K562 (cell line): ENCODE measurements at regions of chr3 and their contacts with region 1.

Region 1: DNA sequence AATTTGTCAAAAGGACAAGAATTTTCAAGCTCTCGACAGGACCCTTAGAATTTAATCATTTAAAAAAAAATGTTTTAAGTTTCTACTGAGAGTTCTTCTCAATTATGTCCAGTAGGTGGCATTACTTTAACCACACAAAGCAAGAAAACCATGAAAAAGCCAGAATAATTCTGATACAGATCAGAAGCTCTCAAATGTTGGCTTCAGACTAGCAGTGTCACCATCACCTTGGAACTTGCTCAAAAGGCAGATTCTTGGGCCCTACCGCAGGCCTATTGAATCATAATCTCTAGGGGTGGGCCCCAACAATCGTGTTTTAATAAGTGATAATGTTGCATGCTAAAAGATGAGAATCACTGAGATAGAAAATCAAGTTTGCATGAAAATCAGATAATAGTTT is 99.5 kb upstream of the KCNMB2 start:
- DNase-seq: peak; percentile 14 to 25 (median 23)
- ATAC-seq: peak; percentile 68
- H3K4me3 ChIP-seq: no peak overlapping the region
- H3K27ac ChIP-seq: no peak overlapping the region
- H3K4me1 ChIP-seq: no peaks in the 10 kb centered on the region; a peak in 1 of 5 replicates
- H3K27me3 ChIP-seq: no peaks in the 10 kb centered on the region
- CTCF ChIP-seq: peak; percentile 41 to 68 (median 45); a peak in 4 of 6 replicates
- EP300 ChIP-seq: no peak
- POLR2A ChIP-seq: no peak
- RAD21 ChIP-seq: peak; percentile 65 to 70

Region 2: DNA sequence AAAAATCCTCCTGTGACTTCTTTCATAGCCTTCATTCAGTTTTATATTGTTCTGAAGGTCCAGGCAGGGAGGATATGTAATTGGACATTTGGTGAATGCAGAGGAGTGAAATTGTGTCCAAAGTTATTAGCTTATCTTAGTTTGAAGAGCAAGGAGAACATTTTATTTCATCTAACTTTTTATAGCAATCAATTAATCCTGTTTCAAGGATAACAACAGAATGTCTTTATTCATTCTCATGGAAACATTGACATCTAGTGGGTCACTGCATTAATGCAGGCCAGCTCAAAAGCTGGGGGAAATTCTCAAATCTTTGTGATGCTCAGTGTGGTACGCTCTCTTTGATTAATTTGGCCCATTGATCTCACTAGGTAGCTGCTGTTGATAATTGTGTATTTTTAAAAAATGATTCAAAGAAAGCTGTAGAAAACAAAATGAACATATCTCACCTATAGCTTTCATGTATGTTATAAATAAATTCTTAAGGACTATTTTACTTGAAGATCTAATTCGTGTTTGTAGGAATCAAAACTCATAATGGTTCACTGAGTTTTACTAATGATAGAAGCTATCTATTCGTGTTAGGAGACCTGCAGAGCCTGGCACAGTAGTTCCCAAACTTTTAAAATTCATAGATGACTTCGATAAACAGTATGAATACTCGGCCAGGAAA is 51.4 kb before region 1 on chr3:
- CTCF ChIA-PET with region 1: no interaction called
- POLR2A ChIA-PET with region 1: no interaction called
- in situ Hi-C with region 1: no loop called
- intact Hi-C with region 1: no loop called
- DNase-seq: peak; percentile 16 to 48 (median 28)
- ATAC-seq: peak; percentile 66; the same call in 2 of the 3 replicates
- H3K4me3 ChIP-seq: no peak overlapping the region
- H3K27ac ChIP-seq: no peak overlapping the region
- H3K4me1 ChIP-seq: no peaks in the 10 kb centered on the region; a peak in 1 of 5 replicates
- H3K27me3 ChIP-seq: no peaks in the 10 kb centered on the region
- CTCF ChIP-seq: peak; percentile 29 to 77 (median 72); a peak in 5 of 6 replicates
- EP300 ChIP-seq: 0 out of 2 replicates have a peak, but pooled peaks have one; percentile 3
- POLR2A ChIP-seq: no peak
- RAD21 ChIP-seq: peak; percentile 91

Region 3: GRCh38 chr3:178637802-178638201 is 201.0 kb after region 1 on chr3:
- CTCF ChIA-PET with region 1: no interaction called
- POLR2A ChIA-PET with region 1: no interaction called
- in situ Hi-C with region 1: no loop called
- intact Hi-C with region 1: no loop called
- DNase-seq: no peak
- ATAC-seq: no peak
- H3K4me3 ChIP-seq: no peak overlapping the region
- H3K27ac ChIP-seq: no peak overlapping the region
- H3K4me1 ChIP-seq: no peaks in the 10 kb centered on the region
- H3K27me3 ChIP-seq: no peaks in the 10 kb centered on the region
- CTCF ChIP-seq: no peak
- EP300 ChIP-seq: no peak
- POLR2A ChIP-seq: no peak
- RAD21 ChIP-seq: no peak

Region 4: DNA sequence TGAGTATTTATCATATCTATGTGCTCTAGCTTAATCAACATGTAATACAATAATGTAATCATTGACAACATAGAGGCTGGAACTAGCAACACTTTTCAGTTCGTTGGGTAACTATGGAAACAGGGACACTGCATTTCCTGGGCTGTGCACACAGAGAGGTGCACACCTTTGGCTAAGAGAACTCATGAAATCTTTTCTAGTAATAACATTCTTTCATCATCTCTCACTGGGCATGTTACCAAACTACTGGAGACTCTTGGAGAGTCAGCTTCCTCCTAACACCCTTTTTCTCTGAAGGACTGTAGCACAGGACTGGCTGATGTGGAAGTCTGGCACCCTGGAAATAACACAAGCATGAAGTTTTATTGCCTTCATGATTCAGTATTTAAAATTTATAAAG is 235.0 kb after region 1 on chr3:
- CTCF ChIA-PET with region 1: no interaction called
- POLR2A ChIA-PET with region 1: no interaction called
- in situ Hi-C with region 1: no loop called
- intact Hi-C with region 1: no loop called
- DNase-seq: no peak
- ATAC-seq: no peak
- H3K4me3 ChIP-seq: no peak overlapping the region
- H3K27ac ChIP-seq: no peak overlapping the region
- H3K4me1 ChIP-seq: no peaks in the 10 kb centered on the region
- H3K27me3 ChIP-seq: no peaks in the 10 kb centered on the region
- CTCF ChIP-seq: no peak
- EP300 ChIP-seq: no peak
- POLR2A ChIP-seq: no peak
- RAD21 ChIP-seq: no peak

Region 5: DNA sequence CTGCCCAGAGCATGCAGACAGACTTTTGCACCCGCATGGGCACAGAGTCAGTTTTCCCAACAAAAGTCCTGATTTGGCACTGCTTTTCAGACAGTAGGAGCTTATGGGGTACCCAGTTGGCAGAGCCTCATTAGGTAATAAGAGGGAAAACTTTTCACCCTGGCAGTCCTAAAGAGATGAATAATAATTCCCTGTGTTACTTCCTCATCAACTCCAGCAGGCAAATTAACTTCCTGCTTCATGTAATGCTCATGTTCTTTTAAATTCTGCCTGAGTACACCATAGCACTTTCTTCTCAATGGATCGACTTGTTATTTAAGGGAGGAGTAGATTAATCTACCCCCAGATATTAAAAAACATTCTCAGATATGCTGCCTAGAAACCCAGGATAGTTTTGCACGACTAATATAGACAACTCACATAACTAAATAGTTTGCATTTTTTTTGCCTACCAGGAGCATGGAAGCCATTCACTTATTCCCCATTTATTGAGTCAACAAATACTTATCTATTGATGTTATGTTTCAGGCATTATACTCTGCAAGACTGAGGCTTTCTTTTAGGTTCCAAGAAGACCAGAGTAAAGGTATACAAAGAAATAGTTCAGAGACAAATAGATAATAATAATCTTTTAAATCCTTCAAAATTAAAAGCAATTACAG is 314.0 kb after region 1 on chr3:
- CTCF ChIA-PET with region 1: no interaction called
- POLR2A ChIA-PET with region 1: no interaction called
- in situ Hi-C with region 1: no loop called
- intact Hi-C with region 1: no loop called
- DNase-seq: no peak
- ATAC-seq: no peak
- H3K4me3 ChIP-seq: no peak overlapping the region
- H3K27ac ChIP-seq: no peak overlapping the region
- H3K4me1 ChIP-seq: no peaks in the 10 kb centered on the region
- H3K27me3 ChIP-seq: no peaks in the 10 kb centered on the region
- CTCF ChIP-seq: no peak
- EP300 ChIP-seq: no peak
- POLR2A ChIP-seq: no peak
- RAD21 ChIP-seq: no peak

Region 6: GRCh38 chr3:178966299-178967176 is 529.8 kb after region 1 on chr3:
- CTCF ChIA-PET with region 1: interaction called, 14 read pairs
- POLR2A ChIA-PET with region 1: no interaction called
- in situ Hi-C with region 1: loop called (anchors 25 kb)
- intact Hi-C with region 1: loop called (anchors 1 kb)
- DNase-seq: peak in 2 of 4 experiments; percentile 8 to 11
- ATAC-seq: 0 out of 3 replicates have a peak, but pooled peaks have one; percentile 38
- H3K4me3 ChIP-seq: no peak overlapping the region
- H3K27ac ChIP-seq: no peak overlapping the region
- H3K4me1 ChIP-seq: no peaks in the 10 kb centered on the region
- H3K27me3 ChIP-seq: no peaks in the 10 kb centered on the region
- CTCF ChIP-seq: peak in 2 of 3 experiments; percentile 28 to 70; a peak in 4 of 6 replicates
- EP300 ChIP-seq: no peak
- POLR2A ChIP-seq: no peak
- RAD21 ChIP-seq: peak; percentile 89 to 90